Activated CD4-positive, alpha-beta T cell treated with anti-CD3 and anti-CD28 coated beads, Interleukin-2, amount 10 ng/mL, durations not matched to agents 24 days and 14 days (primary cell): ENCODE measurements at regions of chr6 and their contacts with region 1.

Region 1: DNA sequence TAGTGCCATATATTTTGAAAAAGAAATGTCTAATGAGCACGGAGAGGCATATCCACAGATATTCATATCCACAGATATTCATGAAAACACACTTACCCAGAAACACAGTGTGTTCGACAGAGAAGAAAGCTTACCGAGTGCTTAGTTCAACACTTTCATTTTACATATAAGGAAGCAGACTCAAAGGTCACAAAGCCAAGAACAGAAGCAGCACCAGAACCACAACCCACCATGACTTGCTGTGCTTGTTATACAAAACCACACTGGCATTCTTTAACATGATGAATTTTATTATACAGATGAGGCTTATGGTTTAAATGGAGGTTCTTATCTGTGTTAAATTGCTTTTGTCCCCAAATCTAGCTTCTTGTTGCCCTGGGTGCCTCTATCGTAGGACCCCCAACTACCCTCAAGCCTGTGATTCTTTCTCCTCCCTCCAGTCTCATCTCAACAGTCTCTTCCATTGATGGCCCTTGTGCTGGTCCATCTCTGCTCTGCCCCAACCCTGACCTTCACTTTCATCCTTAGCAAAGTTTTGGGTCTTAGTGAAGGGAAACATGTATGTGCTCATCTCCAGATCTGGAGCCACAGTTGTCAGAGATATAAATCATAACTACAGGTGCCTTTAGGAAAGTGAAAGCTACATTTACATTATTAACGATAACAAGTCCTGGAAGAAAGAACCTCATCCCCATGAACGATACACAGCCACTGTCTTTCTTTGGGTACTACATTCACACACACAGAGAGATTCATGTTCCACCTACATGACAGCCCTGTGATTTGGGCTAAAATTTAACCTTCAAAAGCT is 40.0 kb downstream of the SF3B5 start:
- DNase-seq: peak; percentile 86
- H3K4me3 Mint-ChIP-seq: peak overlapping the region; percentile 78
- H3K27ac Mint-ChIP-seq: peak overlapping the region; percentile 94
- H3K4me1 Mint-ChIP-seq: peaks cover 27% of the 10 kb centered on the region
- H3K27me3 Mint-ChIP-seq: no peaks in the 10 kb centered on the region

Region 2: GRCh38 chr6:142395768-142396231 is 1659.5 kb before region 1 on chr6:
- intact Hi-C with region 1: loop called (anchors 5 kb)
- DNase-seq: peak; percentile 77
- H3K4me3 Mint-ChIP-seq: peak overlapping the region; percentile 36
- H3K27ac Mint-ChIP-seq: peak overlapping the region; percentile 8
- H3K4me1 Mint-ChIP-seq: peaks cover 13% of the 10 kb centered on the region
- H3K27me3 Mint-ChIP-seq: peaks cover 48% of the 10 kb centered on the region

Region 3: DNA sequence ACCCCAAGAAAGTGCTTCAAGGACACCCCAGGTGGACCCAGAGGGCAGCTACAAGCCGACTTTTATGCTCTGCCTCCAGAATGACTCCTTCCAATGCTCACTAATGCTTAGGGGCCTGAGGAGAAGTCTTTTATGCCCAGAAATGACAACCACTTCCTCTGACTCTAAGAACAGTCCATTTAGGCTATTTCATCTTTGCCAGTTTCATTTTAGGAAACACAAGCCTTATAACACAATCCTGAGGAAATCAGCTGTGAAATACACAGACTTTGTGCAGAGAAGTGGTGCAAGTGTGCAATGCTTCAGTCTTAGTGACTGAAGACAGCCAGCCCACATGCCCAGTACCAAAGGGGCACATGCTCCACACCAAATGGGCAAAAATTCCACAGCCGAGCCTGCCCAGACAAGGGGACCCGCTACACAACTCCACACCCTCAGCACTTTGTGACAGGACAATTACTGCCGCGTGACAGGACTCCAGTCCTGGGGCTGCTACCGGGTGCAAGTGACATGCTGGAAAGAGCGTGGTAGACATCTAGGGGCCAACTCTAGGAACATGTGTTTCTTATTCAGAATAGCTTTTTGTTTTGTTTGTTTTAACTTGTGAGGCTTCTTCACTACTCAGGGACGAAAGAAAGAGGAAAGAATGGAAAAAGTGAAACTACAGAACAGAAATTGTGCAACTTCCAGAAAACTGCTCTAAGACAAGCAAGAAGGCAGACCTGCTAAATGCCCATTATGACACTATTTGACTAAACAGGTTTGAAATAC is 19.1 kb before region 1 on chr6:
- intact Hi-C with region 1: loop called (anchors 2 kb)
- DNase-seq: peak; percentile 76
- H3K4me3 Mint-ChIP-seq: peak overlapping the region; percentile 35
- H3K27ac Mint-ChIP-seq: peak overlapping the region; percentile 9
- H3K4me1 Mint-ChIP-seq: peaks cover 11% of the 10 kb centered on the region
- H3K27me3 Mint-ChIP-seq: no peaks in the 10 kb centered on the region